ENCODE measurements at regions of chr18 and their contacts with region 1.

Region 1: DNA sequence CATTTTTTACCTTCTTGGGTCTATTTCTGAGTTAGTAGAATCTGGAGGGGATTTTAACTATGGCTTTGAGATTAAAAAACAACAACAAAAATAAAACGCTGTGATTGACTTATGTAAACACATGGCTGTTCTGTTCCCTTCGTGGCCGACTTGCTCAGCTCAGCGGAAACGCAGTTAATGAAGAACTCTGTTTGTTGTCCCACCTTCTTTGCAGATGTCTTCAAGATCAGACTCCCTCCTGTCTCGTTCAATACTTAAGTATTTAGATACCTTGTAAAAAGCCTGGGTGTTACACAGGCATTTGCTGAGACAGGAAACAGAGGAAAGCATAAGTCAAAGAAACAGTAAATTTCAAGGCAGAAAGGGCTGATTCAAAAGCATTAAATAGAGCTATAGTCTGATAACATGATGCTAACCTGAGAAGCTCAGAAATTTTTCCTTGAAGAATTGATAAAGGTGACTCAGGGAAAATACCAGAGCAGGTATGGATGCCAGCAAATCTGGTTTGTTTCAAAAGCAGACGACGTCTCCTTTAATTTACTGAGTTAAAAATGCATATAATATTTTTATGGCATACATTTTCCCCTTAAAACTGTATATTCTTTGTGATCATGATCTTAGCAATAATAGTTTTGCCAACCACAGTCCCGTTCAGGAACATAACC is 21.7 kb upstream of the POLI start:
- DNase-seq: no peak
- ATAC-seq: no peak
- H3K4me3 Mint-ChIP-seq: no peak overlapping the region
- H3K27ac Mint-ChIP-seq: peak overlapping the region; percentile 88
- H3K4me1 Mint-ChIP-seq: peaks cover 26% of the 10 kb centered on the region
- H3K27me3 Mint-ChIP-seq: peaks cover 2% of the 10 kb centered on the region

Region 2: DNA sequence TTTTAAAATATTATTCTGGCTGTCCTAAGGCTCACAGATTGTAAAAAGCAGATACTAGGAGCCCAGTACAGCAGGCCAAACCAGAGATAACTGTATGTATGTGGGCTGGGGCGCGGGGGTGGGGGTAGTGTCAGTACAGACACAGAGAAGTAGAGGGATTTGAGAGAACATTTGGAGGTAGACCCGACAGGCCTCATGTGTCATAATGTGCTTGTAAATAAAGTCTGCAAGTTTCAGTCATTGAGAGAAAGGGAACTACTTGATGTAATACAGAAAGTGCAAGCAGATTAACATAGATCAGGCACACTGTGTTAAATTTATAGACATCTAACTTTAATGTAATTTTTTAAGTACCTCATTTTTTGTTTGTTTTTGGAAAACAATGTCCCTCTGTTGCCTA is 14.3 kb after region 1 on chr18:
- CTCF ChIA-PET with region 1: interaction called, 3 read pairs
- POLR2A ChIA-PET with region 1: no interaction called
- intact Hi-C with region 1: loop called in 1 of 2 experiments (anchors 2 kb)
- DNase-seq: peak; percentile 82
- ATAC-seq: peak; percentile 71
- H3K4me3 Mint-ChIP-seq: peak overlapping the region; percentile 52
- H3K27ac Mint-ChIP-seq: peak overlapping the region; percentile 90
- H3K4me1 Mint-ChIP-seq: peaks cover 54% of the 10 kb centered on the region
- H3K27me3 Mint-ChIP-seq: no peaks in the 10 kb centered on the region

Measured in activated CD4-positive, alpha-beta T cell treated with anti-CD3 and anti-CD28 coated beads for 36 hours (primary cell).